CD8-positive, alpha-beta memory T cell (primary cell): ENCODE measurements at regions of chr10 and their contacts with region 1.

Region 1: DNA sequence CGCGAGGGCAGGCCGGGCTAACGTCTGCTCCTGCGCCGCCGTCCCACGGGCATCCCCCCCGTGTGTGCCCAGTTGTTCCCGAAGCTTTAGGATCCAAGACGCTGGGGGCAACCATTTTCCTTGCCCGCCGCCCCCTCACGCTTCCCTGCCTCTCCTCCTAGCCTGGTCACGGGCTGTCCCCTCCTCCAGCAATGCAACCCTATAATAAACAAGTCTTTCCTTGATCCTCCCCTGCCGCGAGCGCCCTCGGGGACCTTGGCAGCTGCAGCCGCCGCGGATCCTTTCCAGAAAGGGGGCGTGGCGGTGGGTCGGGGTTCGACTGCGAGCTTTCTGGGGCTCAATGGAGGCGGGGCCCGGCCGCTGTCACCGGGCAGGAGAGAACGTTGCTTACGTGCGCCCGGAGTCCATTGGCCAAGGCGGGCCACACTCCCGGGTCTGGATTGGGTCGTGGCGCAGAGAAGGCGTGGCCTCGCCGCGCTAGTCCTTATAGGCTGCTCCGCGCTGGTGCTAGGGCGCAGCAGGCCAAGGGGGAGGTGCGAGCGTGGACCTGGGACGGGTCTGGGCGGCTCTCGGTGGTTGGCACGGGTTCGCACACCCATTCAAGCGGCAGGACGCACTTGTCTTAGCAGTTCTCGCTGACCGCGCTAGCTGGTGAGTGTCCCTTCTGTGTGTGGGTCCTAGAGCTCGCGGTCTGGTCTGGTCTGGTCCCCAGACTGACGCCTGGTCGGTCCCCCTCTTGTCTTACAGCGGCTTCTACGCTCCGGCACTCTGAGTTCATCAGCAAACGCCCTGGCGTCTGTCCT is at the start of gene DDIT4:
- DNase-seq: peak; percentile 95 to 98 (median 96)
- H3K4me3 ChIP-seq: peak within 1 kb of the TSS; percentile 88
- H3K4me3 Mint-ChIP-seq: peak within 1 kb of the TSS; percentile 96 to 99 (median 98)
- H3K27ac ChIP-seq: peak within 1 kb of the TSS; percentile 94
- H3K27ac Mint-ChIP-seq: peak within 1 kb of the TSS; percentile 89 to 97 (median 96)
- H3K4me1 ChIP-seq: peaks cover 32% of the 10 kb centered on the region
- H3K4me1 Mint-ChIP-seq: peaks cover 28 to 56% (median 49%) of the 10 kb centered on the region in 3 donors
- H3K27me3 ChIP-seq: no peaks in the 10 kb centered on the region
- H3K27me3 Mint-ChIP-seq: no peaks in the 10 kb centered on the region
- total RNA-seq, gene DDIT4: 144 to 156 TPM

Region 2: GRCh38 chr10:72254813-72255568 is 18.6 kb before region 1 on chr10:
- CTCF ChIA-PET with region 1: interaction called, 29 read pairs
- POLR2A ChIA-PET with region 1: interaction called, 3 read pairs
- DNase-seq: peak in 3 of 5 donors; percentile 26 to 43 (median 41)
- H3K4me3 ChIP-seq: peak overlapping the region; percentile 57
- H3K4me3 Mint-ChIP-seq: peak overlapping the region in 6 of 7 donors; percentile 32 to 81 (median 73)
- H3K27ac ChIP-seq: peak overlapping the region; percentile 66
- H3K27ac Mint-ChIP-seq: peak overlapping the region; percentile 70 to 92 (median 80)
- H3K4me1 ChIP-seq: peaks cover 85% of the 10 kb centered on the region
- H3K4me1 Mint-ChIP-seq: peaks cover 53 to 80% (median 70%) of the 10 kb centered on the region in 3 donors
- H3K27me3 ChIP-seq: no peaks in the 10 kb centered on the region
- H3K27me3 Mint-ChIP-seq: no peaks in the 10 kb centered on the region

Region 3: DNA sequence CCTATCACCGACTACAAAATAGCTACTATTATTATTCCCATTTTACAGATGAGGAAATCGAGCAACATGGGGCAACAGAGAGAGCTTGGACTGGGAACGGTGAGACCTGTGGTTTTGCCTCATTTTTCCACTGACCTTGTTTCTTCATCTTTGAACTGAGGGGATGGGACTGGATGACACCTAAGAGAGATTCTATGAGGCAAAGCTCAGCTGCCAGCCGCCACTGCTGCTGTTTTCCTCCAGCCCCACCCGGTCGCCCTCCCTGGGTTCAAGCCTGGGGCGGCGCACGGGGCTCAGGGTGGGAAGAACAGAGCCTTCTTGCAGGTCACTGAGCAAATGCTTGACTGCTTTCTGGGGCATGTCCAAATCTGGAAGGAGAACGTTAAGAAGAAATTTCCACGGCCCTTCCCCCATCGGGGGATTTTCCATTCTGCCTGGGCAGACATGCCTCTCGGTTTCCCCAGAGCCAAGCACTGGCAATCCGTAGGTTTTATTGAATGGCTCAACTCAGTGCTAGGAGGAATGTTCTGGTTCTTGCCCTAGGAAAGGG is 12.4 kb after region 1 on chr10:
- CTCF ChIA-PET with region 1: interaction called, 43 read pairs
- POLR2A ChIA-PET with region 1: interaction called, 4 read pairs
- DNase-seq: no peak
- H3K4me3 ChIP-seq: peak overlapping the region; percentile 11
- H3K4me3 Mint-ChIP-seq: no peak overlapping the region
- H3K27ac ChIP-seq: no peak overlapping the region
- H3K27ac Mint-ChIP-seq: peak overlapping the region in 6 of 8 donors; percentile 52 to 85 (median 58)
- H3K4me1 ChIP-seq: peaks cover 27% of the 10 kb centered on the region
- H3K4me1 Mint-ChIP-seq: peaks cover 26 to 39% (median 37%) of the 10 kb centered on the region in 3 donors
- H3K27me3 ChIP-seq: no peaks in the 10 kb centered on the region
- H3K27me3 Mint-ChIP-seq: no peaks in the 10 kb centered on the region

Region 4: DNA sequence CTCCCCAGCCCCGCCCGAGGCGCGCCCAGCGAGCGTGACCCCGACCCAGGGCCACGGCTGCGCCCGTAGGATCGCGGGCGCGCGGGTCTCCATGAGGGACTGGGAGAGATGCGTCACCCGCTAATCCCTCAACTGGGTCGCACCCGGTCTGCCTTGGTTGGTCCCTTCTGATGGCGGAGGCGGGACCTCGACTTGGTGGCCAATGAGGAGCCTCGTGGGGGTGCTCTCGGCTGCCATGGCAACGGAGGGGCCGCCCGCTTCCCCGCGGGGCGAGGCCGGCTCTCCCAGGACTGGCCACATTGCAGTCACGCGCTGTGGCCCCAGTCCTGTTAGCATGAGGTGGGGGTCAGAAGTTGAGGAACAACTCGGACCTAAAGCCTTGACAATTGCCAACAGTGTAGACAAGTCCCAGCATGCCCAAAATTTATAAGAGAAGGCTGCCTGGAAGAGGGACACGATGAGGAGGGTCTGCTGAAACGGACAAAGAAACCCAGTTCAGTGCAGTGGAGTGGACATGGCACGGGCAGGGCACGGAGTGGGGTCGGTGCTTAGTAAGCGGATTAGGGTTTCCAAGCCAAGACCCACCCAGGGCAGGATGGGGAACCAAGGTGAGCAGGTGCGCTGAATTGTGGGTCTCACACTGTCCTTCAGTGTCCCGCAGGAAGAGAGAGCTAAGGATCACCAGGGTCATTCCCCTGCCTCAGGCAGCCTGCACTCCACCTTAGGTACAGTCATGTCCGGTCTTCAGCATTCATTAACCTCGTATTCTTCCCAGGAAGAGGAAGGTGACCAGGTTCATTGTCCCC is 24.6 kb after region 1 on chr10:
- CTCF ChIA-PET with region 1: interaction called, 43 read pairs
- POLR2A ChIA-PET with region 1: interaction called, 23 read pairs
- DNase-seq: peak; percentile 72 to 94 (median 87)
- H3K4me3 ChIP-seq: peak overlapping the region; percentile 57
- H3K4me3 Mint-ChIP-seq: peak overlapping the region; percentile 76 to 89 (median 85)
- H3K27ac ChIP-seq: peak overlapping the region; percentile 98
- H3K27ac Mint-ChIP-seq: peak overlapping the region; percentile 97 to 100 (median 99)
- H3K4me1 ChIP-seq: peaks cover 54% of the 10 kb centered on the region
- H3K4me1 Mint-ChIP-seq: peaks cover 36 to 60% (median 41%) of the 10 kb centered on the region in 3 donors
- H3K27me3 ChIP-seq: no peaks in the 10 kb centered on the region
- H3K27me3 Mint-ChIP-seq: peaks cover 0 to 4% of the 10 kb centered on the region in 2 donors

Region 5: GRCh38 chr10:72331601-72332422 is 58.2 kb after region 1 on chr10:
- CTCF ChIA-PET with region 1: interaction called, 88 read pairs
- POLR2A ChIA-PET with region 1: interaction called, 7 read pairs
- DNase-seq: peak; percentile 86 to 98 (median 95)
- H3K4me3 ChIP-seq: peak overlapping the region; percentile 39
- H3K4me3 Mint-ChIP-seq: peak overlapping the region; percentile 55 to 89 (median 79)
- H3K27ac ChIP-seq: peak overlapping the region; percentile 3
- H3K27ac Mint-ChIP-seq: peak overlapping the region; percentile 87 to 98 (median 96)
- H3K4me1 ChIP-seq: peaks cover 97% of the 10 kb centered on the region
- H3K4me1 Mint-ChIP-seq: peaks cover 74 to 94% (median 89%) of the 10 kb centered on the region in 3 donors
- H3K27me3 ChIP-seq: no peaks in the 10 kb centered on the region
- H3K27me3 Mint-ChIP-seq: peaks cover 0 to 1% of the 10 kb centered on the region in 2 donors